ENCODE measurements at regions of chr9 and their contacts with region 1.

Region 1: GRCh38 chr9:114869845-114870244 is 60.5 kb downstream of the TNFSF8 start:
- DNase-seq: no peak
- H3K4me3 ChIP-seq: no peak overlapping the region
- H3K27ac ChIP-seq: no peak overlapping the region
- H3K4me1 ChIP-seq: no peaks in the 10 kb centered on the region
- H3K27me3 ChIP-seq: no peaks in the 10 kb centered on the region
- CTCF ChIP-seq: no peak
- POLR2A ChIP-seq: no peak

Region 2: DNA sequence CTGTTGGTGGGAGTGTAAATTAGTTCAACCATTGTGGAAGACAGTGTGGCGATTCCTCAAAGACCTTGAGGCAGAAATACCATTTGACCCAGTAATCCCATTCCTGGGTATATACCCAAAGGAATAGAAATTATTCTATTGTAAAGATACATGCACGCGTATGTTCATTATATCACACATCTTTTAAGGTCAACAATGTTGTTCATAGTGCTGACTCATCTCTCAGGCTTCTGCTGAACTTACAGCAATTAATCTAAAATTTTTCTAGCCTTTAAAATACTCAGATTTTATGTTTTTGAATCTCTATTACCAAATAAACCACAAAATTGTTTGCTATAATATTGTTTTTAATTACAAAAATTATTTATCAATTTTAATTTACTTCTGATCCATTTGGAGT is 1032.5 kb before region 1 on chr9:
- intact Hi-C with region 1: no loop called
- DNase-seq: no peak
- H3K4me3 ChIP-seq: no peak overlapping the region
- H3K27ac ChIP-seq: no peak overlapping the region
- H3K4me1 ChIP-seq: no peaks in the 10 kb centered on the region
- H3K27me3 ChIP-seq: no peaks in the 10 kb centered on the region
- CTCF ChIP-seq: no peak
- POLR2A ChIP-seq: no peak

Region 3: GRCh38 chr9:114397848-114398605 is 471.8 kb before region 1 on chr9:
- intact Hi-C with region 1: loop called (anchors 10 kb)
- DNase-seq: peak; percentile 97 to 98
- H3K4me3 ChIP-seq: peak overlapping the region; percentile 73 to 87 (median 86)
- H3K27ac ChIP-seq: peak overlapping the region; percentile 93 to 95
- H3K4me1 ChIP-seq: peaks cover 6 to 13% of the 10 kb centered on the region in 2 donors
- H3K27me3 ChIP-seq: no peaks in the 10 kb centered on the region
- CTCF ChIP-seq: peak in 2 of 3 donors; percentile 10 to 12
- POLR2A ChIP-seq: peak; percentile 74

Region 4: GRCh38 chr9:114805670-114806525 is 63.9 kb before region 1 on chr9 and contains the start of gene TNFSF15:
- intact Hi-C with region 1: no loop called
- DNase-seq: peak in 1 of 2 donors; percentile 36
- H3K4me3 ChIP-seq: peak within 1 kb of the TSS in 2 of 3 donors; percentile 21 to 35
- H3K27ac ChIP-seq: peak within 1 kb of the TSS; percentile 48 to 71
- H3K4me1 ChIP-seq: peaks cover 3 to 6% of the 10 kb centered on the region in 2 donors
- H3K27me3 ChIP-seq: no peaks in the 10 kb centered on the region
- CTCF ChIP-seq: no peak
- POLR2A ChIP-seq: no peak
- total RNA-seq, gene TNFSF15: 0.16 to 2.0 (median 0.66) TPM